Activated B cell treated with CpG ODN at 0.5 μM for 24 hours (primary cell): ENCODE measurements at regions of chr5 and their contacts with region 1.

Region 1: DNA sequence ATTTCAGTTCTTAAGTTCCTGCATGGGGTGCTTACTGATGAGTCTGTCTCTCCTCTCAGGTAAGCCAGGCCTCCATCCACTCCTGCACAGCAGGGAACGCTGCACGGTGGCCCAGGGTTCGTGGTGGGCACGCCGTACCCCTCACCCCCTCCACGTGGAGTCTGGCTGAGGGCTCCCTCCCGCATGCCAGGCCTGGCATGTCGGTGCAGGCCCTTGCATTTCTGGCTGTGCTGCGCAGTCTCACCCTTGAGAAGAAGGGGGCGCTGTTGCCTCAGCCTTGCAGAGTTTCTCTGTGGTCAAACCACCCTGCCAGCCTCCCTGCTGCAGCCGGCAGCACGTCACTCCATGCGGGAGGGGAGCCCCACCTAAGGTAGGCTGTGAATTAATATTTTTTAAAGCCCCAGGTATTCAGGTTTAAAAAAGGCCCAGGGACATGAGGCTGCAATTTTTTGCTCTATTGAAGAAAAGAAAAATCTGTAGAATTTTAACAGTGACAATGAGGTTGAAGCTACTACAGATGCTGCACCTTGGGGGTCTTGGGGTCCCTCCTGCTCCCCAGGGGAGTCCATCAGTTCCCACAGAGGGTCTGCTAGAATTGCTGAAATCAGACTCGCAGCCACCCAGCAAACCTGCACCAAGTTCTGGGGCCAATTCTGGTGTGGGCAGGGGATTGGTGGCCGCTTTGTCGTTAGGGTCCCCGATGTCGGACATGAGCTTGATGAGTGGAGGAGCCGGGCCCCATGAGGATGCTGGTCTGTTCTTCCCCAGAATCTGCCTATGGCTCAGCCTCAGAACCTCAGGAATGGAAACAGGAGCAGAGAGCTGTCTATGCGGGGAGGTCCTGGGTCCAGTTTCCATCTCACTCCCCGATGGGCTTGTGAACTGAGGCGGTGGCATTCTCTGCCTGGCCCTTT is 52.6 kb downstream of the TENT4A start:
- DNase-seq: no peak
- ATAC-seq: peak; percentile 47
- H3K4me3 Mint-ChIP-seq: no peak overlapping the region
- H3K27ac Mint-ChIP-seq: no peak overlapping the region
- H3K4me1 Mint-ChIP-seq: no peaks in the 10 kb centered on the region
- H3K27me3 Mint-ChIP-seq: peaks cover 3% of the 10 kb centered on the region
- CTCF ChIP-seq: no peak

Region 2: DNA sequence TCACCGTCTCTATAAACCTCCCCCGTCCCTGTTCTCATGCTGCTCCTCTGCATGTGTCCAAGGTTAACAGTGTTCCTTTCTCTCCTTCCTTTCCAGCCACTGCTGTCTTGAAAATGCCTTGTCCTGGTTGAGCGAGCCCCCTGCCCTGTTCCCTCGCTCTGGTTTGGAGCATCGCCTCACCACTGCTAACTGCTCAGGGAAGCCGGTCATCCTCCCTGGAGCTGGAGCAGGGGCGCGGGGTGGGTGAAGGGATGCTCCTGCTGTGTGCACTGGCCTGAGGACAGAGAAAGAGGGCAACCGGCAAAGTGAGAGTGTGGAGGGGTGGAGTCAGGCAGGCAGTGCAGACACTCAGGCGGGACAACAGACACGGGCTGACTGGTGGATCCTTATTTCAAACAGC is 297.8 kb before region 1 on chr5:
- CTCF ChIA-PET with region 1: no interaction called
- POLR2A ChIA-PET with region 1: no interaction called
- intact Hi-C with region 1: no loop called
- DNase-seq: no peak
- ATAC-seq: no peak
- H3K4me3 Mint-ChIP-seq: no peak overlapping the region
- H3K27ac Mint-ChIP-seq: no peak overlapping the region
- H3K4me1 Mint-ChIP-seq: peaks cover 3% of the 10 kb centered on the region
- H3K27me3 Mint-ChIP-seq: no peaks in the 10 kb centered on the region
- CTCF ChIP-seq: no peak

Region 3: DNA sequence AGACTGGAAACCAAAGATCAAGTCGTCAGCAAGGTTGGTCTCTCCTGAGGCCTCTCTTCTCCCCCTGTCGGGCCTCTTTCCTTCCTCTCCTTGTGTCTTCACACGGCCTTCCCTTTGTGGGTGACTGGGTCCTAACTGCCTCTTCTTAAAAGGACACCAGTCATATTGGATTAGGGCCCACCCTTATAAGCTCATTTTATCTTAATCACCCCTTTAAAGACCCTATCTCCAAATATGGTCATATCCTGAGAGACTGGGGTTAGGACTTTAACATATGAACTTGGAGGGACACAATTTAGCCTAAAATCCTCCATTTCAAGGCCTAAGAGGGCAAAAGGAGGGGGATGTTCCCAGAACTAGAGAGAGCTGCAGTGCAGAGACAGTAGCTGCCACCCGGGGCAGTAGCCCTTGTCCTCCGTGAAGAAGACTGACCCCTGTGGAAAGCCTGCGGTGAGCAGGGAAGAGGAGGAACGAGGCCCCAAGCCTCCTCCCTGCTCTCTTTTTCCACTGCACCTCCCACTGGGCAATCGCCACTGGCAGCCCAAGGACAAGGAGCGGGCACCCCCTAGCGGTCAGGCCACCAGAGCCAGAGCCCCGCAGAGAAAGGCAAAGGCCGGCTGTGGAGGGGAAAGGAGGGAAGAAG is 1050.1 kb after region 1 on chr5:
- CTCF ChIA-PET with region 1: no interaction called
- POLR2A ChIA-PET with region 1: no interaction called
- intact Hi-C with region 1: loop called (anchors 2 kb)
- DNase-seq: peak; percentile 34
- ATAC-seq: no peak
- H3K4me3 Mint-ChIP-seq: no peak overlapping the region
- H3K27ac Mint-ChIP-seq: no peak overlapping the region
- H3K4me1 Mint-ChIP-seq: no peaks in the 10 kb centered on the region
- H3K27me3 Mint-ChIP-seq: peaks cover 35% of the 10 kb centered on the region
- CTCF ChIP-seq: no peak